Motor neuron (in vitro differentiated cells): ENCODE measurements at regions of chr1 and their contacts with region 1.

Region 1: DNA sequence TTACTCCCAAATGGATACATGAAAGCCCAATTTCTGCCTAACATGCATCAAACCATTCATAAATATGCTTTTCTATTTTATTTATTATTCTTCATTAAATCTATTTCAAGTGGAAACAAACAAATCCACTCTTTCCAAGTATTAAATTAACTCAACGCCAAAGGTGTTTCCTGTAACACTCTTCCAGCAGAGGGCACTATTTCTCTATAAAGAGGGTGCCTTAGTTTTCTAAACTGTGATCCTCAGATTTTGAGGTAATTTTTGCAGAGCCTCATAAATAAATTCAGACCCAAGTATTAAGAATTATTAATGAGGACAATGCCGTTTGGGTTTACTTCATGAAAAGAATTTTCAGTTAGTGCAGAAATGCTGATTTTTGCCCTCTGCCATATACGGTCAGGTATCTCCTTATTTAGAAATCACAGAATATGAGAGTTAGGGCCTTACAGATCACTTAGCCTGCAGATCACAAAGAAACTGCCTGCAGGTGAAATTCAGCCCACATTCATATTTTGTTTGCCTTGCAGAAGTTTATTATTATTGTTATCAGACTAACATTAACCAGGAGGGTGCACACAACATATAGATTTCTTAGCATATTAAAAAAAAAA is 40.1 kb upstream of the MYSM1 start:
- ATAC-seq: peak in 5 of 8 experiments; percentile 43 to 60 (median 59)
- H3K4me3 ChIP-seq: no peak overlapping the region
- H3K27ac ChIP-seq: no peak overlapping the region
- H3K4me1 ChIP-seq: peaks cover 6 to 12% of the 10 kb centered on the region in 2 donors

Region 2: DNA sequence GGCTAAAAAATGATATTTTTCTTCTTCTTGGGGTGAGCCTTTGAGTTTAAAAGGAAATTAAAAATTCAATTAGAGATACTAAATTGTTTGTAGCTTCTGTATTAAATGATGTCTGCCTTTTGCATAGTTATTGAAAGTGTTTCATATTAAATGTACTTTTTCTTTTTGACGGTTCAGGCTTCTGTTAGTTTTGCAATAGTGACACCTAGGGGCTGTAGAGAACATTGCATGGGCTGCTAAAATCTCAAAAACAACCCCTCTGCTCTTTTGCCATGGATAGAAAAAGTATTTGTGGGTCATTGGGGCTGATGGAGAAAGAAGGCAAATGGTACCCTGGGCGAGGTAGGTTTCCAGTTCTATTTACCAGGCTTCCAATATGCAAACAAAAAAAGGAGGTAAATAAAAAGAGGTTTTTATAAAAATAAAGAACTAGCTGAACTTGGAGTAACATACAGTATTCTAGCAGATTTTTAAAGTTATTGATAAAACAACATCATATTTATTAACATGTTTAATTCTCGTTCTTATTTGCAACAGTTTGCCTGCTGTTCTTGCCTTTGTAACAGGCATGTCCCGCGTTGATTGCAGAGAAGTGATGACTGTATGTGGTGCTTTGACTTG is 959.4 kb after region 1 on chr1:
- in situ Hi-C with region 1: loop called in 3 of 9 experiments (anchors 25 kb)
- ATAC-seq: peak in 5 of 8 experiments; percentile 33 to 44 (median 42)
- H3K4me3 ChIP-seq: no peak overlapping the region
- H3K27ac ChIP-seq: no peak overlapping the region
- H3K4me1 ChIP-seq: peaks cover 21 to 22% of the 10 kb centered on the region in 2 donors

Region 3: GRCh38 chr1:59718064-59718988 is 978.4 kb after region 1 on chr1:
- in situ Hi-C with region 1: loop called in 2 of 9 experiments (anchors 25 kb)
- ATAC-seq: no peak
- H3K4me3 ChIP-seq: no peak overlapping the region
- H3K27ac ChIP-seq: no peak overlapping the region
- H3K4me1 ChIP-seq: peaks cover 10 to 17% of the 10 kb centered on the region in 2 donors

Region 4: GRCh38 chr1:59759156-59759925 is 1019.4 kb after region 1 on chr1:
- in situ Hi-C with region 1: loop called in 2 of 9 experiments (anchors 25 kb)
- ATAC-seq: peak; percentile 90 to 94 (median 92)
- H3K4me3 ChIP-seq: no peak overlapping the region
- H3K27ac ChIP-seq: no peak overlapping the region
- H3K4me1 ChIP-seq: peaks cover 8% of the 10 kb centered on the region in 2 donors

Region 5: GRCh38 chr1:59947047-59947938 is 1207.3 kb after region 1 on chr1:
- in situ Hi-C with region 1: loop called in 2 of 9 experiments (anchors 25 kb)
- ATAC-seq: peak; percentile 84 to 98 (median 92)
- H3K4me3 ChIP-seq: no peak overlapping the region
- H3K27ac ChIP-seq: no peak overlapping the region
- H3K4me1 ChIP-seq: no peaks in the 10 kb centered on the region